ENCODE measurements at regions of chr10 and their contacts with region 1.

Region 1: DNA sequence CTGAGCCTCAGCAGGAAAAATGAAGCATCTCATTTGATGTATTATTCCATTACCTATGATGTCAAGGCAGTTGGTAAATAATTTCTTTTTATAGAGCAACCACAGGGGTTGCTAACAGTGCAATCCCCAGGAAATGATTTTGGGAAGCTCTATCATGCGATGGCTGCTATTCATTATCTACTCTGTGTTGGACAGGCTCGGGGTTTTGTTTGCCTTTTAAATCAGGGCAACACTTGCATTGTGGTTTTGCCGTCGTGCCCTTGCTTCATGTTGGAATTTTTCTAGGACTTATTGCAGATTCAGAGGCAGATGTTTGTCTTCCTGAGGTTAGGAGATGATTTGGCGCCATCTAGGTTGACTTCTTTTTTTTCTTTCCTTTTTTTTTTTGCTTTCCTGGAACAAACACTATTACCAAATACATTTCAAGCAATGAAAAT is 128.4 kb downstream of the BICC1 start:
- DNase-seq: no peak
- ATAC-seq: peak in 2 of 4 donors; percentile 41 to 53
- H3K4me3 ChIP-seq: no peak overlapping the region
- H3K27ac ChIP-seq: peak overlapping the region in 2 of 12 donors; percentile 5 to 35
- H3K4me1 ChIP-seq: peaks cover 0 to 40% (median 8%) of the 10 kb centered on the region in 12 donors
- H3K27me3 ChIP-seq: no peaks in the 10 kb centered on the region
- CTCF ChIP-seq: peak in 5 of 12 donors; percentile 17 to 35 (median 26)
- POLR2A ChIP-seq: no peak

Region 2: GRCh38 chr10:57818522-57818921 is 822.6 kb before region 1 on chr10:
- intact Hi-C with region 1: no loop called
- DNase-seq: no peak
- ATAC-seq: no peak
- H3K4me3 ChIP-seq: no peak overlapping the region
- H3K27ac ChIP-seq: no peak overlapping the region
- H3K4me1 ChIP-seq: no peaks in the 10 kb centered on the region
- H3K27me3 ChIP-seq: no peaks in the 10 kb centered on the region
- CTCF ChIP-seq: no peak
- POLR2A ChIP-seq: no peak

Region 3: DNA sequence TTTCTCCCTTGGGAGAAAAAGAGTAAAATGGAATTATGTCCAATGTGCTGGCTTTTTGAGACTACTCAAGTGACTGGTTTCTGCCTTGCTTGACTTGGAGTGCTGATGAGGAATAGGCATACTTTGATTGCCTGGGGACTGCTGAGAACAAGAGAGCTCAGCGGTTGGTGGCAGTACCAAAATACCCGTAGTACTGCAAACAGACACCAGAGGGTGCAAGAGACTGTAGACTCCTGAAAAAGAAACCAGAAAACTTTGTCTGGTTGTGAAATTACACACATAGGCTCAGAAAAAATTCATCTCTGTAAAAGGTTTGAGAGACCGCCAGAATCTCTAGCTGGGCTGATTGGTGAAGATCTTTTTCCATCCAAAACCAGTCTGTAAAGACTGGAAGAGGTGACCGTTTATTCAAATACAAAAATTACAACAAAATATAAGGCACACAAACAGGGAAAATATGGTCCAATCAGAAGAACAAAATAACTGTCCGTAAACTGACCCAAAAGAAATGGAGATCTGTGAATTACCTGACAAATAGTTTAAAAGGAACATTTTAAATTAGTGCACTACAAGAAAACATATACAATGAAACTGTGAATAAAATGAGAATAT is 109.9 kb before region 1 on chr10:
- intact Hi-C with region 1: loop called in 4 of 10 experiments (anchors 5 to 10 kb)
- DNase-seq: peak in 3 of 5 donors; percentile 21 to 37 (median 26)
- ATAC-seq: no peak
- H3K4me3 ChIP-seq: no peak overlapping the region
- H3K27ac ChIP-seq: no peak overlapping the region
- H3K4me1 ChIP-seq: no peaks in the 10 kb centered on the region
- H3K27me3 ChIP-seq: no peaks in the 10 kb centered on the region
- CTCF ChIP-seq: peak; percentile 44 to 73 (median 59)
- POLR2A ChIP-seq: no peak

Region 4: DNA sequence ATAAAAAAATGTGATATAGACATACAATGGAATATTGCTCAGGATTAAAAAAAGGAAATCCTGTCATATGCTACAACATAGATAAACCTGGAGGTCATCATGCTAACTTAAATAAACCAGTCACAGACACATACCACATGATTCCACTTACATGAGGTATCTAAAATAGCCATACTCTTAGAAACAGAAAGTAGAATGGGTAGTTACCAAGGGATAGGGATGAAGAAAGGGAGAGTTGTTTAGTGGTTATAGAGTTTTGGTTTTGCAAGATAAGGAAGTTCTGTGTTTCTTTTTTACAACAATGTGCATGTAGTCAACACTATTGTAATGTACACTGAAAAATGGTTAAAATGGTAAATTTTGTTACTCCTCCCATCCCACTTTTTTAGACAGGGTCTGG is 98.0 kb before region 1 on chr10:
- intact Hi-C with region 1: loop called in 2 of 10 experiments (anchors 10 kb)
- DNase-seq: no peak
- ATAC-seq: no peak
- H3K4me3 ChIP-seq: no peak overlapping the region
- H3K27ac ChIP-seq: no peak overlapping the region
- H3K4me1 ChIP-seq: peaks cover 0 to 23% (median 0%) of the 10 kb centered on the region in 12 donors
- H3K27me3 ChIP-seq: no peaks in the 10 kb centered on the region
- CTCF ChIP-seq: no peak
- POLR2A ChIP-seq: no peak

Region 5: GRCh38 chr10:58775960-58776567 is 135.0 kb after region 1 on chr10:
- intact Hi-C with region 1: loop called in 1 of 10 experiments (anchors 10 kb)
- DNase-seq: peak in 2 of 5 donors; percentile 36 to 42
- ATAC-seq: peak; percentile 63 to 93 (median 86)
- H3K4me3 ChIP-seq: no peak overlapping the region
- H3K27ac ChIP-seq: peak overlapping the region in 6 of 12 donors; percentile 24 to 52 (median 38)
- H3K4me1 ChIP-seq: peaks cover 0 to 36% (median 1%) of the 10 kb centered on the region in 12 donors
- H3K27me3 ChIP-seq: no peaks in the 10 kb centered on the region
- CTCF ChIP-seq: no peak
- POLR2A ChIP-seq: no peak

Measured in heart left ventricle (tissue), 16 donors.